ENCODE measurements at regions of chr18 and their contacts with region 1.

Region 1: DNA sequence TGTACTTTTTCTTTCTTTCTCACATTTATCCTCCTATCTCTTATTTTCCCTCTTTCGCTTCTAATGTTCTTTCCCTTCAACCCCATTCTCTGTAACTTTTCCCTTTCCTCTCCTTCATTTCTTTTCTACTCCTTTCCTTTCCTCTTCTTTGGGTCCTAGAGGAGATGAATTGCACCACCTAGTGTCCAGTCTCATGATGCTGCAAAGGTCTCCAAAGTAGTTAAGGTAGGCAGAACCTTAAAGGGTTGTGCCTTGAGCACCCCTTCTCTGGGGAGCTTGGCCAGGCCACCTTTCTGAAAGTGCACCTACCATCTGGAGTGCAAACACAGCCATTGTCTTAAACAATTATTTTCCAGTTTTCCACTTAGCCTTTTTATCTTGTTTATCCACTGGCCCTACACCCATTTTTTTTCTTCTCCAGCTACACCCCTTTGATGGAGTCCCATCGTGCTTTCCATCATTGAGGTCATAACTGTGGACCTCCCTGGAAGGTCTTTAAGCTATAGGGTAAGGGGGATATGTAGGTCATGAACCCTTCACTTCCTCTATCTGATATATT is 156.0 kb downstream of the ESCO1 start:
- DNase-seq: peak; percentile 58
- H3K4me3 ChIP-seq: no peak overlapping the region
- CTCF ChIP-seq: peak; percentile 90

Region 2: GRCh38 chr18:21369146-21369545 is 75.4 kb before region 1 on chr18:
- in situ Hi-C with region 1: no loop called
- DNase-seq: peak; percentile 22
- H3K4me3 ChIP-seq: no peak overlapping the region
- CTCF ChIP-seq: no peak

Region 3: GRCh38 chr18:21391074-21391673 is 53.4 kb before region 1 on chr18:
- in situ Hi-C with region 1: no loop called
- DNase-seq: no peak
- H3K4me3 ChIP-seq: no peak overlapping the region
- CTCF ChIP-seq: no peak

Region 4: GRCh38 chr18:21404410-21404809 is 40.1 kb before region 1 on chr18:
- in situ Hi-C with region 1: loop called (anchors 5 kb)
- DNase-seq: no peak
- H3K4me3 ChIP-seq: no peak overlapping the region
- CTCF ChIP-seq: no peak

Region 5: GRCh38 chr18:21557607-21558253 is 113.2 kb after region 1 on chr18:
- in situ Hi-C with region 1: no loop called
- DNase-seq: no peak
- H3K4me3 ChIP-seq: no peak overlapping the region
- CTCF ChIP-seq: no peak